Adrenal gland (tissue), 19 donors: ENCODE measurements at regions of chr14 and their contacts with region 1.

Region 1: DNA sequence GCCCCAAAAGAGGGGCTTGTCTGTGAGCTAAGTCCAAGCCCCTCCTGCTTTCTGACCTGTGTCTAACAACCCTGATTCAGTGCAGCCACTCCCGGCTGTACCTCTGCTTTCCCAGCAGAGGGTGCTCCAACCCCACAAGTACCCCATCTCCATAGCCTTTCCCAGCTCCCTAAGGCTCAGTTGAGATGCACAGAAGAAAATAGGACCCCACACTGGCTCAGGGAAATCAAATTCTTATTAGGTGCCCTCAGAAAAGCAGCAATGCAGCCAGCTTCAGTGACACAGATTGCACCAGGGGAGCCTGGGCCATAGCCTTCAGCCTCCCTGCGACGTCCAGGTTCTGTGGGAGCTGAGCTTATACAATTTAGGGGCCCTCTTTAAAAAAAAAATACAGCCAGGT is 49.9 kb downstream of the LRRC74A start:
- DNase-seq: peak; percentile 54 to 85 (median 72)
- H3K4me3 ChIP-seq: no peak overlapping the region
- H3K27ac ChIP-seq: no peak overlapping the region
- H3K4me1 ChIP-seq: no peaks in the 10 kb centered on the region
- H3K27me3 ChIP-seq: no peaks in the 10 kb centered on the region
- CTCF ChIP-seq: peak; percentile 88 to 97 (median 96)
- POLR2A ChIP-seq: no peak

Region 2: DNA sequence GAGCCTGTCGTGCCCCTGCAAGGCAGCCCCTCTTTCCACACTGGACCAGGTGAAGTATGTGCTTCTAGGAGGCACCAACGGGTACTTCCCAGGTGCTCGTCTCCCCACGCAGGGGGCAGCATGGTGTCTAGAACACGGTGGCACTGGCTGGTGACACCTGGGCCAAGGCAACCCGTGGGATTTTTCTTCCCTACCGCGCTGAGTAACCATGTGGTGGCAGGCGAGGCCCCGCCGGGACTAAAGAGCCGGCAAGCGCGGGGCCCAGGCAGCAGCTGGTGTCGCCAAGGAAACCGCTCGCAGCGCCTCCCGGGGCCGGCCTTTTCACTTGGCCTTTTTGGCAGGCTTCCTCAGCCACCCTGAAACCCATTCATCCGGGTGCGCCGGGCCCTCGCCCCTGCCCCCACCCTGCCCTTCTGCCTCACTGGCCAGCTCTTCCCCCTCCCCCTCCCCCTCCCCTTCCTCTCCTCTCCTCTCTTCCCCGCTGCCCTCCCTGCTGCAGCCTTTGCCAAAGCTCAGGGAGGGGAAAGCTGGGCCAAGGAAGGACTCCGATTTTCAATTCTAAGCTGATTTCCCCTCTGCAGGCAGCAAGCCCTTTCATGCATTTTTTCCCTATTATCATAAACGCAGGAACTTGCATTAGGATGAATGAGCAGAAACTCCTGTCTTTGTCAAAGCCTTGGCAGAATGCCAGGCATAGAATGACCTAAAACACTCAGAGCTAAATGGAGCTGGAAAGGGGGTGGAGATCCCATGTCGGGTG is 71.2 kb after region 1 on chr14:
- intact Hi-C with region 1: no loop called
- DNase-seq: peak; percentile 92 to 97 (median 94)
- H3K4me3 ChIP-seq: peak overlapping the region in 1 of 4 donors; percentile 1
- H3K27ac ChIP-seq: peak overlapping the region; percentile 69 to 91 (median 87)
- H3K4me1 ChIP-seq: peaks cover 35 to 38% of the 10 kb centered on the region in 2 donors
- H3K27me3 ChIP-seq: no peaks in the 10 kb centered on the region
- CTCF ChIP-seq: peak; percentile 23 to 63 (median 54)
- POLR2A ChIP-seq: peak in 1 of 2 donors; percentile 23

Region 3: GRCh38 chr14:77067632-77068514 is 191.8 kb after region 1 on chr14:
- intact Hi-C with region 1: loop called (anchors 2 to 5 kb)
- DNase-seq: peak; percentile 62 to 86 (median 80)
- H3K4me3 ChIP-seq: no peak overlapping the region
- H3K27ac ChIP-seq: peak overlapping the region in 1 of 5 donors; percentile 42
- H3K4me1 ChIP-seq: peaks cover 0 to 28% of the 10 kb centered on the region in 2 donors
- H3K27me3 ChIP-seq: no peaks in the 10 kb centered on the region
- CTCF ChIP-seq: peak; percentile 66 to 93 (median 90)
- POLR2A ChIP-seq: no peak

Region 4: GRCh38 chr14:77314043-77314442 is 438.0 kb after region 1 on chr14:
- intact Hi-C with region 1: loop called in 1 of 2 experiments (anchors 10 kb)
- DNase-seq: peak in 5 of 7 donors; percentile 46 to 71 (median 65)
- H3K4me3 ChIP-seq: no peak overlapping the region
- H3K27ac ChIP-seq: peak overlapping the region in 4 of 5 donors; percentile 9 to 74 (median 57)
- H3K4me1 ChIP-seq: peaks cover 14 to 47% of the 10 kb centered on the region in 2 donors
- H3K27me3 ChIP-seq: no peaks in the 10 kb centered on the region
- CTCF ChIP-seq: no peak
- POLR2A ChIP-seq: peak in 1 of 2 donors; percentile 42

Region 5: DNA sequence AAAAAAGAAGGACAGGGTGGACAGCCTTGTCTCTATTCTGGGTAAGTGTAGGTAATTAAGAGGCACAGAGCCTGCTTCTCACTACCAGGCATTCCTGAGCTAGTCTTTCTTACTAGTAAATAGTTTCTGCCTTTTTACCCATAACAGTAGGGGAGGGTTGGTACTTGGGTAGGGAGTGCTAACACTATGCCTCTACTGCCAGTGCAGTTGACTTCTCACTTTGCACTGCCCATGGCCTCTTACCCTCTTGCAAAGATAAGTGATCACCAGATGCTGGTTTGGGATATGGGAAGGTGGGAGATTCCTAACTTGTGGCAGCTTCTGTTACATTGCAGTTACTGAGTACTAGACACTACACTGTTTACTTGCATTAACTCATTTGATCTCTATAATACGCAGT is 593.5 kb after region 1 on chr14:
- intact Hi-C with region 1: loop called in 1 of 2 experiments (anchors 10 kb)
- DNase-seq: no peak
- H3K4me3 ChIP-seq: no peak overlapping the region
- H3K27ac ChIP-seq: no peak overlapping the region
- H3K4me1 ChIP-seq: no peaks in the 10 kb centered on the region
- H3K27me3 ChIP-seq: no peaks in the 10 kb centered on the region
- CTCF ChIP-seq: no peak
- POLR2A ChIP-seq: no peak

Region 6: DNA sequence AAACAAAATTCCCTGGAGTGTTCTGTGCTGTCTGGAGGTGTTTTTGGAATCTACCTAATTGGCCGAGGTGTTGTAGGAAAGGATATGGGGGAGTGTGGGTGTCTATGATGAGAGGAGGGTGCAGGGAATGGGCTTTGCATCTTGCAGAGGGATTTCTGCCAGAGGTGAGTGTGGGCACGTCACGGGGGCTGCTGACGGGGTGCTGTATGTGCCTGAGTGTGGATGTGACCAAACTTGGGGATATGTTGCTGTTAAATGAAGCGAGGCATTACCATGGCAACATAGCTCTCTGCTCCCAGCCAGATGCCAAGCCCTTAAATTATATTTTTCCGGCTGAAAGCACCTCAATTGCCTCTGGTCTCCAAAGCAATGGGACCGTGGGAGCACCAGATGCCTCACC is 784.7 kb after region 1 on chr14:
- intact Hi-C with region 1: no loop called
- DNase-seq: peak in 1 of 7 donors; percentile 35
- H3K4me3 ChIP-seq: no peak overlapping the region
- H3K27ac ChIP-seq: no peak overlapping the region
- H3K4me1 ChIP-seq: peaks cover 0 to 7% of the 10 kb centered on the region in 2 donors
- H3K27me3 ChIP-seq: no peaks in the 10 kb centered on the region
- CTCF ChIP-seq: no peak
- POLR2A ChIP-seq: no peak